Calu3 (cell line): ENCODE measurements at regions of chr14 and their contacts with region 1.

Region 1: DNA sequence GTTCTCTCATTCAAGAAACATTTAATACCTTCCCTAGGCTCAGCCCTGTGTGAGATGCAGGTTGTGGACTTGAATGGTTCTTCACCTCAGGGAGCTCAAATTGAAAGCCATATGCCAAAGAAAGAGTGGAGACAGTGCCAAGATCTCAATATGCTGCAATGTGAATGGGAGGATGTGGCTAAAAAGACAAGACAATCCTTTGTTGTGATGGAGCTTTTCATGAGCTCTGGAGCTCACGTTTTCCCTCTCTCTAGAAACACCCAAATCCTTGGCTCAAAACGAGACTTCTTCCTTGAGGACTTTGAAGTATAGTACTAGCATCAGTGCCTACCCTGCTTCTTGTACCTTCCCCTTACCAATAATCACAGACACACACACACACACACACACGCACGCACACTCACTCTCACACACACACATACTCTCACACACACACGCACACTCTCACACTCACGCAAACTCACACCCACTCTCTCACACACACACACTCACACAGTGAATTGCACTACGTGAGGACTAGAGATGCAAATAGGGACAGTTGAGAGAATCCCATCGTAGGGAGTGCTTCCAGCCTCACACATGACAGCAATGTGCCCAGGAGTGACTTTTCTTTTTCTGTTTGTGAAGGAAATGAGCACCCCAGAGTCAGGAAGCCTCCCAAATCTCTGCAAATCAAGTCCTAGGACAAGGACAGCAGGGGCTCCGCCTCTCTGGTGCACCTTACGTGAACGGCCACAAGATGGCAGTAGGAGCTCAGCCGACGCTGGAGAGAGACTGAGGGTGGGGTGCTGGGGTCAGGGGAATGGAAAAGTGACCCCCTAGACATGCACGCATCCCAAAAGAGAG is 231.4 kb downstream of the PCNX1 start:
- DNase-seq: peak; percentile 67
- H3K4me3 Mint-ChIP-seq: no peak overlapping the region
- H3K27ac Mint-ChIP-seq: no peak overlapping the region
- H3K4me1 Mint-ChIP-seq: peaks cover 8% of the 10 kb centered on the region
- H3K27me3 Mint-ChIP-seq: no peaks in the 10 kb centered on the region
- CTCF ChIP-seq: peak; percentile 89

Region 2: DNA sequence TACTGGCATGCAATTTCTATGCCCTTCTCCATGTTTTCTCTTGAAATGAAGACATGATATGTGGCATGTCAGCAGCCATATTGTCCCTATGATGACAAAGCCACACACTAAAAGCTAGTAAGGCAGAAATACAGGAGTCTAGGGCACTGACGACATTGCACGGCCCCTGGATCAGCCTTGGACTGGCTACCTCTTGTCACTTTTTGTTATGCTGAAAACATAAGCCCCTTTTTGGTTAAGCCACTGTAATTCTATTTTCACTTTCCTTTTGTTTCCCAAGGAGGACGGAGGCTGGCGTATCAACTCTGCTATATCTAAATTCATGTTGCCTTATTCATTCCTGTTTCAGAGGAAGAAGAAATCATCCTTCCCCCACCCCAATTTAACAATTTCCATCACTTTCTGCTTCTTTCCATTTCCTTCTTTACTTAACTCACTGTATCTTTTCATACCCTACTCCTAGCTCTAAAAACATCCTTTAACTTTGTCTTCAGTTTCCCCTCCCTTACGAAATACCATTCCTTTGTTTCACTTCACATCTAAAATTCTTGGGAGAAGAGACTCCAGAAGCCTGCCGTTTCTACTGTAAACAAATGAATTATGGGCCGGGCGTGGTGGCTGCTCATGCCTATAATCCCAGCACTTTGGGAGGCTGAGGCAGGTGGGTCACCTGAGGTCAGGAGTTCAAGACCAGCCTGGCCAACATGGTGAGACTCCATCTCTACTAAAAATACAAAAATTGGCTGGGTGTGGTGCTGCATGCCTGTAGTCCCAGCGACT is 132.7 kb after region 1 on chr14:
- CTCF ChIA-PET with region 1: no interaction called
- intact Hi-C with region 1: no loop called
- DNase-seq: no peak
- H3K4me3 Mint-ChIP-seq: no peak overlapping the region
- H3K27ac Mint-ChIP-seq: no peak overlapping the region
- H3K4me1 Mint-ChIP-seq: no peaks in the 10 kb centered on the region
- H3K27me3 Mint-ChIP-seq: peaks cover 7% of the 10 kb centered on the region
- CTCF ChIP-seq: no peak

Region 3: DNA sequence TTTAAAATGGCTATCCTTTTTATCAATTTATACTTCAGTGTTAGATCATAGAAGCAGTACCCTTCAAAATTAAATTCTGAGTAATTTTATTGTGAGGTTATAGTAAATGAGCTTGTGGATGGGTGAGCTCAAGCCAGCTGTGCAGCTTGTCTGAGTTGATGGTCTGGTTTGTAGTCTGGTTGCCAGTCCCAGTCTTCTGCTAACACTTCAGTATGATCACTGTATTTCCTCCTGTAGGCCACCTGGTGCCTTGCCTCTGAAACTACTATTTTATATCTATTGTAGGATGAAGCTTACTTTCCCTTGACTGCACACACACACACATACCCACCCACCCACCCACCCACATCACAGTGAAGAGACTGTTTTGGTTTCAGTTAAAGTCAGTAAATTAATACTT is 265.0 kb after region 1 on chr14:
- CTCF ChIA-PET with region 1: interaction called, 3 read pairs
- intact Hi-C with region 1: loop called (anchors 1 kb)
- DNase-seq: peak; percentile 29
- H3K4me3 Mint-ChIP-seq: no peak overlapping the region
- H3K27ac Mint-ChIP-seq: no peak overlapping the region
- H3K4me1 Mint-ChIP-seq: no peaks in the 10 kb centered on the region
- H3K27me3 Mint-ChIP-seq: no peaks in the 10 kb centered on the region
- CTCF ChIP-seq: no peak

Region 4: GRCh38 chr14:71745072-71745471 is 606.4 kb after region 1 on chr14:
- CTCF ChIA-PET with region 1: interaction called, 3 read pairs
- intact Hi-C with region 1: loop called (anchors 2 kb)
- DNase-seq: no peak
- H3K4me3 Mint-ChIP-seq: no peak overlapping the region
- H3K27ac Mint-ChIP-seq: no peak overlapping the region
- H3K4me1 Mint-ChIP-seq: peaks cover 20% of the 10 kb centered on the region
- H3K27me3 Mint-ChIP-seq: no peaks in the 10 kb centered on the region
- CTCF ChIP-seq: no peak